ENCODE measurements at regions of chr2 and their contacts with region 1.

Region 1: DNA sequence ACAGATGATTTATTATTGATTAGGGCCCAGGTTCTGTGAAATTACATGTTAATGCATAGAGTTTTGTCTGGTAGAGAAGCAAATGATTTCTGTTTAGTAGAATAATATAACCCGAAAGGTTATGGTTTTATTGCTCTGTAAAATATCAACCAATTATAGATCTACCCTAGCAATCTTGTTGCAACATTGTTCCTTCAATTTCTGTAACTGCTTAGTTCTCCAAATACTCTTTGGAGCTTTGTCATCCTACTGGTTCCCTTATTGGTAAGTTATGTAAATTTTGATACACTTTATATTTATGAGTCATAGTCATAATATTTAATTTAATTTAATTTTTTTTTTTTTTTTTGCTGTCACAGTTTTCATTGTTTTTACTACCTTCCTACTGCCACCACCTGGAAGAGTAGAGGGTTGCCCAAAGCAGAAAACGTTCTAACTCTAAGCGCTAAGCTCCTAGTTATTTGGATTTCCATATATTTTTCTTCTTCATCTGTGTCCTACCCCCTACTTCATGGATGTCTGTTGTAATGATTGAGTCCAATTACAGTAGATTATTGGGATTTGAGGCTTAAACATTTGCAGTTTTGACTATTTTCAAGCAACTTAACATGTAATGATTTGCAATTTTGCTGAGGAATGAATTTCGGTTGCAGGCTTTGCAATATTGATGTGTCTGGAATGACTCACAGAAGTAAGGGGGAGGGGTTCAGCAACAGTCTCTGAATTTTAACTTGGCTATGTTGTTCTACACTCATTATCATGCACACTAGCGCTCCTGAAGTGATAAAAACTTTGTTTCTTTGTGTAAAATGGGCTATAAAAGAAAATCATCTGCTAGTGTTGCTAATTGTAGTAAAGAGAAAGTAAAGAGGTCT is 51.1 kb downstream of the NABP1 start:
- DNase-seq: no peak
- ATAC-seq: no peak
- H3K4me3 ChIP-seq: no peak overlapping the region
- H3K4me3 Mint-ChIP-seq: no peak overlapping the region
- H3K27ac ChIP-seq: no peak overlapping the region
- H3K27ac Mint-ChIP-seq: no peak overlapping the region
- H3K4me1 ChIP-seq: no peaks in the 10 kb centered on the region
- H3K4me1 Mint-ChIP-seq: no peaks in the 10 kb centered on the region
- H3K27me3 ChIP-seq: no peaks in the 10 kb centered on the region
- H3K27me3 Mint-ChIP-seq: peaks cover 0 to under 1% of the 10 kb centered on the region in 2 donors

Region 2: DNA sequence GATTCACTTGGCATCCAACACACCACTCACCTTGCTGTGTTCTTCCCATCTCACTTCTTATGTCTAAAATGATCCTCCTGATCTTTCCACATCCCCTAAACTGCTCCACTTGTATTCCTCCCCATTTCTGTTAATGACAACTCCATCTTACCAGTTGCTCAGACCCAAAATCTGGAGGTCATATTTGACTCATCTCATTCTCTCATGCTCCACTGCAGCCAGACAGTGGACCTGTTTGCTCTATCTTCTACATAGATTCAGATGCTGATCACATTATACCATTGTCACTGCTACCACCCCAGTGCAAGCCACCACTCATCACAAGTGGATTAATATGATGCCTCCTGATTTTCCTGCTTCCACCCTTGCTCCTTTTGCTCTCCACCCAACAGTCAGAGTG is 58.9 kb before region 1 on chr2:
- CTCF ChIA-PET with region 1: no interaction called
- POLR2A ChIA-PET with region 1: no interaction called
- DNase-seq: no peak
- ATAC-seq: no peak
- H3K4me3 ChIP-seq: no peak overlapping the region
- H3K4me3 Mint-ChIP-seq: no peak overlapping the region
- H3K27ac ChIP-seq: no peak overlapping the region
- H3K27ac Mint-ChIP-seq: no peak overlapping the region
- H3K4me1 ChIP-seq: peaks cover under 1 to 5% of the 10 kb centered on the region in 2 experiments
- H3K4me1 Mint-ChIP-seq: peaks cover 12 to 18% (median 17%) of the 10 kb centered on the region in 3 donors
- H3K27me3 ChIP-seq: no peaks in the 10 kb centered on the region
- H3K27me3 Mint-ChIP-seq: no peaks in the 10 kb centered on the region

Region 3: DNA sequence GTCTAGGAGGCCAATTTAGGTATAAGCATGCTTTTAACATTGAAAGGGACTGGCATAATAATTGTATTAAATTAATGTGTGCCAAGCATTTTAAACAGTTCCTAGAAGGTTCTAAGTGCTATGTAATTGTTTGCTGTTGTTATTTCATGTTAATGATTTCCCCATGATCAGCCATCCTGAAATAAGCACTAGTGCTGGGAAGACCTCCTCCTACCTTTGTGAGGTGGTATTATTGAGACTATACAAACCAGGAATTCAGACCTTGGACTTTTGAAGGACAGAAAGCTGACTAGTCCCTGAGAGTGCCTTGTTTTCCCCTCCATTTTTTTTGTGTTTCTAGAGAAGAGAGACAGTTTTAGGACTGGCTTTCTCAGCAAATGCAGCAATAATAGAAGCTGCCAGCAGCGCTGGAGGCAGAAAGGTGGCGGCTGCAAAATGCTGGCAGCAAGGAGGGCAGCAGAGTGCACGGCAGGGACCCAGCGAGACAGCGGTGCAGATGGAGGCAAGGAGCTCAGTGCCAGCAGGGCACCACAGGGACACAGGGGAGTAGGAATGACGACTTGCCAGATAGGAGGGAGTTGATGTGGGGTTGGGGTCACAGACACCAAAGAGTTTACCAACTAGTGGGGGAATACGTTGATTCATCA is 25.8 kb before region 1 on chr2:
- CTCF ChIA-PET with region 1: no interaction called
- POLR2A ChIA-PET with region 1: no interaction called
- DNase-seq: no peak
- ATAC-seq: no peak
- H3K4me3 ChIP-seq: no peak overlapping the region
- H3K4me3 Mint-ChIP-seq: no peak overlapping the region
- H3K27ac ChIP-seq: no peak overlapping the region
- H3K27ac Mint-ChIP-seq: no peak overlapping the region
- H3K4me1 ChIP-seq: no peaks in the 10 kb centered on the region
- H3K4me1 Mint-ChIP-seq: peaks cover 0 to 5% (median 2%) of the 10 kb centered on the region in 3 donors
- H3K27me3 ChIP-seq: no peaks in the 10 kb centered on the region
- H3K27me3 Mint-ChIP-seq: no peaks in the 10 kb centered on the region

Region 4: DNA sequence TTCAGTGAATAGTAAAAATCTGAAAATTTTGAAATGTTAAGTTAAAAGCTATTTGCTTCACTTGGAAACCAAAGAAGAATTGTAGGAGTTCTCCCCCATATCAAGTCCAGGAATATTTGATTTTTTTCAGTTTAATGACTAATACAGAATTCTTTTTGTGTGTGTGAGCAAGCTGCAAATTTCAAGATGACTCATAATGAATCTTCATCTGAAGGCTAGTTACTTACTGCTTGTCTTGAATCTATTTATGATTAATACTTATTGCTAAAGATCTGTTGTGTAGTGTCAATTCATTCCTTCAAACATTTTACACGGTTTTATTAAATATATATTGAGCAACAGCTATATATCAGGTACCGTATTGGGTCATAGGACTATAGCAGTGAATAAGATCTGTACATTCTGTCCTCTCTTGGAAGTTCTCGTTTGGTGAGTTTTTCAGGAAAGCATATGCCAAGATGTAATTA is 165.7 kb after region 1 on chr2:
- CTCF ChIA-PET with region 1: no interaction called
- POLR2A ChIA-PET with region 1: interaction called in 1 of 2 experiments, 16 read pairs
- DNase-seq: no peak
- ATAC-seq: no peak
- H3K4me3 ChIP-seq: no peak overlapping the region
- H3K4me3 Mint-ChIP-seq: no peak overlapping the region
- H3K27ac ChIP-seq: no peak overlapping the region
- H3K27ac Mint-ChIP-seq: no peak overlapping the region
- H3K4me1 ChIP-seq: no peaks in the 10 kb centered on the region
- H3K4me1 Mint-ChIP-seq: no peaks in the 10 kb centered on the region
- H3K27me3 ChIP-seq: peaks cover 0 to 3% of the 10 kb centered on the region in 2 experiments
- H3K27me3 Mint-ChIP-seq: peaks cover 8 to 16% of the 10 kb centered on the region in 2 donors